GM10248 (cell line): ENCODE measurements at regions of chr9 and their contacts with region 1.

Region 1: DNA sequence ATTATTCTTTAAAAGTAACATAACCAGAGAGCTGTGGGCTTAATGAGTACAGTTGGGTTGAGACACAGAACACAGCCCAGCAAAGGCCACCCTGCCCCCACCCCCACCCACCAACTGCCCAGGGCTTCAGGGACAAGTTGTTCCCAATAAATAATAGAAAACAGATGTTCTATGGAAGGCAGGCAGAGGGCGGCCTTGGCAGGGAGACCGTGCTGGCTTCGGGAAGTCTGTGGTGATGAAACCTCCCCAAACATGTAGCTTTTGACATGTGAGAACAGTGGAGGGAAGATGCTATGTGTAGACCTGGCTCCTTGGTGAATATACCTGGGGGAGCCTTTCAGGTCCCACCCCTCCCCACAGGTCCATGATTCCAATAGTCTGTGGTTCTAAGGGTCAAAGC is 10.0 kb downstream of the TRAF1 start:
- DNase-seq: no peak
- CTCF ChIP-seq: no peak

Region 2: DNA sequence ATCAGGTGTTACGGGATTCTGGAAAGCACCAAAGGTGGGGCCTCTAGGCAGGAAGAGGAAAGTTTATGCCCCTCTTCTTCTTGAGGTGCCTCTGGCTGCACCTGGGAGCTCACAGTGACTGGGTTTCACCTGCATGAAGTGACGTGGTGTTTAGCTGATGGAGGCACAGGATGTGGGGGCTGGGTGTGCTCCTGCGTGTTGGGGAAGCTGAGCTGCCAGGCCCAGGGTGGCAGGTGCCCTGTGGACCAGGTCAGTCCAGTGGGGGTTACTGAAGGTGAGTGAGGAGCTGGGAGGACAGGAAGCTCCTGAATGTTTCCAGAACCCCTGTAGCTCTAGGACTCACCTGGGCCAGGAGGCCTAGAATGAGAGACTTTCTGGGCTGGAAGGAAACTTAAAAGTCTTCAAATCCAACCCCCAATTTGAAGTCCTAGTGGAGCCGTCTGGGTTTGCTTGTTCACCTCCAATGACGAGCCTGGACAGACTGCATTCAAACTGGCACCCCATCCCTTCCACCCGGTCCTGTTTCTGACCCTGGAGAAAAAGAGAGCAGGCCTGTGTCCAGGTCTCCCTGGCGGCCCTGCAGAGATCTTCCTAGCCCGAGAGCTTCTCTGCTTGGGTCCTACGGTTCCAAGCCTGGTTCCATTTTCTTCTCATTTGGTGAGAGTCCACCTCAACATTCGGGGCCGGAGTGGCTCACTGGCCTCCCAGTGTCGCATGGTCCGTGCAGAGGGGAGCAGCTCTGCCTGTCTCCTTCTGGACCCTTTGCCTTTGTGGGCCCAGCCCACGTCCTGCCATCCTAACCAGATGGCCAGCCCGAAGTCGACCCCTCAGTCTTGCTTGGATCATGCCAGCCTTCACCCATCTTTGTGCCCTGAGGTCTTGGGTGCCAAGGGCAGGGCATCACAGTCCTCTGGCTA is 12.3 kb before region 1 on chr9:
- CTCF ChIA-PET with region 1: interaction called, 10 read pairs
- POLR2A ChIA-PET with region 1: interaction called, 4 read pairs
- DNase-seq: no peak
- CTCF ChIP-seq: no peak

Region 3: DNA sequence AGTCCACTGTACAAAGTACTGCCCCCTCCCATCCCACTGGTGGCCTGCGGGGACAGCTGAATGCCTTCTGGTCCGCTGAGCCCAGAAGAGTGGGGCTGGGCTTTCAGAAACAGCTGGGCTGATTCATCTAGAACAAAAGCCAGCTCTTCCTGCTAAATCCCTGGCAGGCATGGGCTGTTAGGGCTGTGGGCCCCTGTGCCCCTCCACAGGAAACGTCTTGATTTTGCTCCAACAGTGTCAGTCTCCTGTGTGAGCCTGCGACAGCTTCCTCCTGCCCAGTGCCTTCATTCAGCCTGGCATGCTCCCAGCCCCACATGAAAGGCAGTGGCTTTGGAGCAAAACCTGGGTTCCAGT is 344.5 kb after region 1 on chr9:
- CTCF ChIA-PET with region 1: no interaction called
- POLR2A ChIA-PET with region 1: no interaction called
- DNase-seq: no peak
- CTCF ChIP-seq: no peak